Dorsolateral prefrontal cortex (tissue), 120 donors: ENCODE measurements at regions of chr20 and their contacts with region 1.

Region 1: DNA sequence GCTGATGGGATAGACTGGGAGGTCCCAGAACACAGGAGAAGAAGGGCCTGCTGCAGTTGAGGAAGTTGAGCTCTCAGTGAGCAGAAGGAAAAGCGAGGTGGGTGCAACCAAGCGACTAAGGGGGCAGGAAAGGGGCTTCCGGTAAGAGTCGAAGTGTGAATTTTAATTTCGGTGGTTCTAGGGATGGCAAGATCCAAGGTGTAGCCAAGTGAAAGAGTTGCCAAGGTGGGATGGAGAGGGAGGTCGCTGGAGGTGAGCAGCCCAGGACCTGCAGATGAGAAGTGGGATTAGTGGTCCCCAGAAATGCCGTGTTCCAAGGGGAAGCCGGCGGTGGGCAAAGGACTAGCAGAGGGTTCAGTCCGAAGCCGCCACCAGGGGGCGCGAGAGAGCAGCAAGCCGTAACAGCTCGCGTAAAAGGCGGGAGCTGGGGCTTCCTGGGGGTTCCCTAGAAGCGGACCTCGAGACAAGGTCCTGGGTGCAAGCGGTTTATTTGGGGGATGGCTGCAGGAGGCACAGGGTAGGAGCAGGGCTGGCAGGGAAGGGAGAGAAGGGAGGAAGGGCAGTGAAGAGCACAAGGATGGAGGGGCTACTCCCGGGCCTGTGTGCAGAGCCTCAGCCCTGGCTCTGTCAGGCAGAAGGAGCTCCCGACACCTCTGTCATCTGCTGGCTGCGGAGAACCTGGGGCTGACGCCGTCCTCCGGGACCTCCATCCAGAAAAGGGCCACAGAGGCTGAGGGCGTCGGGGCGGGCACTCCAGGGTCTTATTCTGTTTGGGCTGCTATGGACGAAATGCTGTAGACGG is 103.6 kb downstream of the PAX1 start:
- DNase-seq: peak in 4 of 10 donors; percentile 16 to 49 (median 32)
- H3K4me3 ChIP-seq: no peak overlapping the region
- H3K27ac ChIP-seq: no peak overlapping the region
- H3K27me3 ChIP-seq: peaks cover 0 to 32% (median 4%) of the 10 kb centered on the region in 45 donors
- CTCF ChIP-seq: peak; percentile 31 to 78 (median 68)

Region 2: DNA sequence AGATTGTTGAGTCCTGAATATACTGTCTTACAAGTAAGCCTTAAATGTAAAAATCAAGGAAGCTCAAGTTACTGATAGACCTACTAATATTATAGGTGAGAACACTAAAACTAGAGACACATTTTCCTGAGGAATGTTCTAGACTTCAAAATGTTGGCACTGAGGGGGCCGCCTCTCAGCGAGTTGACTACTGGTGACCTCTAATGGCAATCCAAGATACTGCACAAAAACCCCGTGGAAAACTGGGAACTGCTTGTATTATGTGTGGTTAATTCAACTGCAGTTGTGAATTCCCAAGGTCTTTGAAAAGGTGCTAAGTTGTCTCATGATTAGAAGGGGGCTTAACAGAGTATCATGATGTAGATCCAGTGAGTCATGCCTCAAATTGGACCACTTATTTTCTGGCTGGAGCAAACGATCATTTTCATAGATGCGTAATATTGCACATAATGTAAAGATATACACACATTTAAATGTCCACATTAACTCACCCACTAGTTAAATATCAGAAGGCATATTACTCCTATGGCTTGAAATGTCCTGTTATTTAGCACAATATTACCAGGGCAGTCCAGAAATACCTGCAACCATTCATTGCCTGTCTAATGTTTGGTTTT is 439.1 kb after region 1 on chr20:
- intact Hi-C with region 1: loop called in 1 of 2 experiments (anchors 5 kb)
- DNase-seq: no peak
- H3K4me3 ChIP-seq: no peak overlapping the region
- H3K27ac ChIP-seq: no peak overlapping the region
- H3K27me3 ChIP-seq: peaks cover 0 to 37% (median 9%) of the 10 kb centered on the region in 45 donors
- CTCF ChIP-seq: peak in 53 of 56 donors; percentile 3 to 63 (median 42)

Region 3: DNA sequence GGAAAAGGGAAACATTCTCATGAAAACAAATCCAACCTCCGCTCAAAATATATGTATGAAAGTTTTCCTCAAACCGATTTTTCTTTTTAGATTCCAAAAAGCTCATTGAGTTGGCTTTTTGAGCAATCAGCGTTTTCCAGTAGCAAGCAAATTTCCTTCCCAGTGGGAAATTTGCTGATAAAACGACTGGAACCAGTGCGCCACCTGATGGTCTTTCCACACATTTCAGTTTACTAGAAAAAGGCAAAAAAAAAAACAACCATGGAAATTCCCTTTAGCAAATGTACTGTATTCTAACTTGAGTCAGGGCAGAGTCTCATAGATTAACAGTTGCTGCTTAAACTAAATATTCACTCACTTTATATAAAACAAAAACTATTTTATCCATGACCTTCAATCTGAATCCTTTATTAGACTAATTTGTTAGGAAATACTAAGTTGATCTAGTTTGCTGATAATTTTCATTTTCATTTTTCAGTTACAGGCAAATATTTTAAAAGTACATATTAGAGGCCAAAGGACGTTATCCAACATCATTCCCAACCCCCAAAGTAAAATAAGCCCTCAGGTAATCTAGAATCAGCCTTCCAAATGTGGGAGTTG is 503.8 kb after region 1 on chr20:
- intact Hi-C with region 1: loop called in 1 of 2 experiments (anchors 5 kb)
- DNase-seq: peak in 3 of 10 donors; percentile 6 to 37 (median 7)
- H3K4me3 ChIP-seq: no peak overlapping the region
- H3K27ac ChIP-seq: no peak overlapping the region
- H3K27me3 ChIP-seq: peaks cover 0 to 33% (median 5%) of the 10 kb centered on the region in 45 donors
- CTCF ChIP-seq: peak; percentile 55 to 82 (median 72)